Dendritic cell treated with granulocyte-macrophage colony-stimulating factor and Interleukin-4, amounts not matched to agents 40 ng/mL and 50 ng/mL, for 4 days (primary cell): ENCODE measurements at regions of chr4 and their contacts with region 1.

Region 1: DNA sequence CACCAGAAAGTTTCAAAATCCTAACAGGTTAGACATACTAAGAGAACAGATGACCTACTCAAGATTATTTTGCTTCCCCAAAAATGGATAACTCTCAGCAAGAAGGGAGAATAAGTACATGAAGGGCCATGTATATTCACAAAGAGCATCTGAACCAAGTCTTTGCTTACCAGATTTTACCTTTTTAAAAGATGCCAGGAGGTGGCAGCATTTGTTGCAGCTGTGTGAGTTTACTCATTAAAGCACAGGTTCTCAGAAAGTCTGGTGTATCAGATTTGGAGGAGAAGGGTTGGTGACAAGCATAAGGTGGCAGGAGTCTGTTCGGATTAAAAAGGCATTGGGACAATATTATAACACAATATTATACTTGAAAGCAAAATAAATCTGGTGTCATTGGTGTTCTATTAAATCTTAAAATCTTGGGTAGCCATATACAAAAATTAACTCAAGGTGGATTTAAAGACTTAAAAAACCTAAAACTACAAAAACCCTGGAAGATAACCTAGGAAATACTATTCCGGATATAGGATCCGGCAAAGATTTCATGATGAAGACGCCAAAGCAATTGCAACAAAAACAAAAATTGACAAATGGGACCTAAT is 51.3 kb upstream of the NFKB1 start:
- H3K4me3 Mint-ChIP-seq: no peak overlapping the region
- H3K27ac Mint-ChIP-seq: no peak overlapping the region
- H3K4me1 Mint-ChIP-seq: peaks cover 17% of the 10 kb centered on the region
- H3K27me3 Mint-ChIP-seq: no peaks in the 10 kb centered on the region

Region 2: DNA sequence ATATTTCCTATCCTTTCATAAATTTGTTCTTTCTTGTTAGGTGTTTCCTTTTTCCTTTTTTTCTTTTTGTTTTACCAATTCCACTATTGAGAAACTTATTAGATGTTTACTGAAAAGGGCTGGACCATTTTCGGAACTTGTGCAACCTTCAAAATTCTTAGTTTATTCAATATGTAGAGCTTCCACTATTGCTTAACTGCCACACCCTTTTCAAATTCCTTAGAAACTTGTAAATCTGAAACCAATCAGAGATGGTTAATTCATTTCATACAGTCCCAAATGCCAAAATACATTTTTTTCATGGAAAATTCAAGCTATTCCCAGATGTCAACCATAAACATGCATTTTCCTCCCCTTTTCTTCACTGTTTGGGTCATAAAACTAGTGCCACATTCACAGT is 38.4 kb before region 1 on chr4:
- intact Hi-C with region 1: no loop called
- H3K4me3 Mint-ChIP-seq: no peak overlapping the region
- H3K27ac Mint-ChIP-seq: no peak overlapping the region
- H3K4me1 Mint-ChIP-seq: peaks cover 22% of the 10 kb centered on the region
- H3K27me3 Mint-ChIP-seq: no peaks in the 10 kb centered on the region

Region 3: DNA sequence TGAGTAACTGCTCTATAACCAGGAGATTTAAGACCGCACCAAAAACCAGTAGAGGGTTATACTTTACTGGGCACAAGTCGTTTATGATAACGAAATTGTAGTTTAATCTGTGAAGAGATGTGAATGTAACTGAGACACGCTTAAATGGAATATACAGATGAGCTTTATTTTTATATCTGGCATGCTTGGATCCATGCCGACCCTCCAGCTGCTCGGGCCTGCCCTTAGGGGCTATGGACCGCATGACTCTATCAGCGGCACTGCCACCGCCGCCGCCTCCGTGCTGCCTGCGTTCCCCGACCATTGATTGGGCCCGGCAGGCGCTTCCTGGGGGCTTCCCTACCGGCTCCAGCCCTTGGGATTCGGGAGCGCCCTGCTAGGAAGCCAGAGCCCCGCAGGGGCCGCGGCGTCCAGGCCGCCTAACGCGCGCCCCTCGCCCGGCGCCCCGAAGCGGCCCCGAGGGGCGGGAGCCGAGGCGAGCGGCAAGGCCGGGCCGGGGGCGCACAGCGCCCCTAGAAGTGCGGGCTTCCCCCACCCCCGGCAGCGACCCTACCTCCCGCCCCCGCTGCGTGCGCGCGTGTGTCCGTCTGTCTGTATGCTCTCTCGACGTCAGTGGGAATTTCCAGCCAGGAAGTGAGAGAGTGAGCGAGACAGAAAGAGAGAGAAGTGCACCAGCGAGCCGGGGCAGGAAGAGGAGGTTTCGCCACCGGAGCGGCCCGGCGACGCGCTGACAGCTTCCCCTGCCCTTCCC is 51.0 kb after region 1 on chr4 and contains the start of gene NFKB1:
- intact Hi-C with region 1: loop called (anchors 5 kb)
- H3K4me3 Mint-ChIP-seq: peak within 1 kb of the TSS; percentile 94
- H3K27ac Mint-ChIP-seq: peak within 1 kb of the TSS; percentile 96
- H3K4me1 Mint-ChIP-seq: peaks cover 20% of the 10 kb centered on the region
- H3K27me3 Mint-ChIP-seq: peaks cover 2% of the 10 kb centered on the region

Region 4: DNA sequence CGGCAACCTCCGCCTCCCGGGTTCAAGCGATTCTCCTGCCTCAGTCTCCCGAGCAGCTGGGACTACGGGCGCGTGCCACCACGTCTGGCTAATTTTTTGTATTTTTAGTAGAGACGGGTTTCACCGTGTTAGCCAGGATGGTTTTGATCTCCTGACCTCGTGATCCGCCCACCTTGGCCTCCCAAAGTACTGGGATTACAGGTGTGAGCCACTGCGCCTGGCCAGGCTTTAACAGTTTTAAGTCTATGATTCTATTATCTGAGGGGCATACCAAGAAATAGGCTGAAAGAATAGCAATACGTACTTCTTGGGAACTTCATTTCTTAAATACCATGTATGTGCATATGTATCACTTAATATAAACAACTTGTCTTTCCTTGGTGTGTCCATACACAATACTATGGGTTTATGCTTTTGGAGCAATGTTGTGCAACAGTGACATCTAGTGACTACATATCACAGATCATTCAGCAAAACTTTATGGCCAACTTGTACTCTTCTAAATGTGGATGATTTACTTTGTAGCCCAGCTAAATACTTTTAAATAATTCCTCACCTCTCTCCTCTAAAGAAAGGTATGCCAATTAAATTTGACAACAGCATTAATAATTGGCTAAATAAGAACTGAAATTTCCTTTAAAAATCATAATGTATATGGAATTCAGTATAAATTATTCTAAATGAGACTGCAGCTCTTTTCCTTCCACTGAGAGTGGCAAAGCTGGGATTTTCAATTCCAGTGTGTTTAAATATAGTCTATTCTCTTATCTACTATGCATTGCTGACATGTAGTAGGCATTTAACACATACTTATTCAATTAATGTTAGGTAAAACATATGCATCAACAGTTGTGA is 559.2 kb after region 1 on chr4:
- intact Hi-C with region 1: loop called (anchors 5 kb)
- H3K4me3 Mint-ChIP-seq: no peak overlapping the region
- H3K27ac Mint-ChIP-seq: no peak overlapping the region
- H3K4me1 Mint-ChIP-seq: no peaks in the 10 kb centered on the region
- H3K27me3 Mint-ChIP-seq: no peaks in the 10 kb centered on the region